ENCODE measurements at regions of chr18 and their contacts with region 1.

Region 1: DNA sequence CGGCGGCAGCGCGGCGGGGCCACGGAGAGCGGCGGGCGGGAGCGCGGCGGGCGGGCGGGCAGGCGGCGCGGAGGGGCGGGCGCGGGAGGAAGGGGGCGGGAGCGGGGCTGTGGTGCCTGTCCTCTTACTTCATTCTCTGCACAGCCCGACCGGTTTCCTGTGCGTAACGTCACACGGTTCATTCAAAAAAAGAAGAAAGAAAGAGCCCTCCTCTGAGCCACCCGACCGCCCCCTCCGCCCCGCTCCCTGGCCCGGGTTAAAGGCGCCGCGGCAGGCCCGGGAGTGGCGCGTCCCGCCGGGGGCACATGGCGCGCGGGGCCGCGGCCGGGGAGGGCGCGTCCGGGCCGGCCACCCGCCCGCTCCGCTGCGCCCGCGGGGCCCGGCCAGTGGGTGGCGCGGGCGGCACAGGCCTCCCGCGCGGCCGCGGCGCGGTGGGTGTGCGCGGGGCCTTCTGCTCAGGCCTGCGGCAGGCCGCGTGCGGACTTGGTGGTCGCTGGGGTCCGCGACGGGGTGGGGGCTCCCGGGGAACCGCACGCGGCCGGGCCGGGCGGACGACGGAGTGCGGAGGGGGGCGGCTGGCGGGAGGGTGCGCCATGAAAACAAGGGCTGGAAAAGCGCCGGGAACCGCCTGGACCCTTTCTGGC is 599 bp upstream of the BCL2 start:
- DNase-seq: peak; percentile 83
- H3K4me3 ChIP-seq: peak overlapping the region; percentile 77
- H3K27ac ChIP-seq: no peak overlapping the region
- H3K4me1 ChIP-seq: peaks cover 8% of the 10 kb centered on the region; the same call in 1 of the 2 replicates
- H3K27me3 ChIP-seq: no peaks in the 10 kb centered on the region

Region 2: DNA sequence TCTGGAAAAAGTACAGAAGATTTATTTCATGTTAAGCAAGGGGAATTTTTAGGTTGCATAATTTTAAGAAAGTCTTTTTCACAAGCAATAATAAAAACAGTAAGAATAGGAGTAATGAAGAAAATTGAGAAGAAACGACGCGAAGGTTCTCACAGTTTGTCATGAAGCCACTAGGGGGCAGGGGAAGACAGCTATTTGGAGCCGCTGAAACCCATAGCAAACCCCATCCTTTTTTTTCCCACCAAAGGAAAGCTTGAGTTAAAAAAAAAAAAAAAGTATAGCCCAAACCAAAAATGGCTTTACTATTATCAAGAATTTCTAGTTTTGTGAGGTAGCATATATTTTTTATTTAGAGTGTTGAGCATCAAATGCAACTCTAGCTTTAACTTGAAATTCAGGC is 303.9 kb before region 1 on chr18:
- in situ Hi-C with region 1: loop called (anchors 5 kb)
- DNase-seq: peak; percentile 82
- H3K4me3 ChIP-seq: no peak overlapping the region
- H3K27ac ChIP-seq: no peak overlapping the region
- H3K4me1 ChIP-seq: no peaks in the 10 kb centered on the region
- H3K27me3 ChIP-seq: peaks cover 31% of the 10 kb centered on the region; the same call in 1 of the 2 replicates

Measured in GM23248 (cell line).